CD4-positive, alpha-beta T cell (primary cell): ENCODE measurements at regions of chr6 and their contacts with region 1.

Region 1: DNA sequence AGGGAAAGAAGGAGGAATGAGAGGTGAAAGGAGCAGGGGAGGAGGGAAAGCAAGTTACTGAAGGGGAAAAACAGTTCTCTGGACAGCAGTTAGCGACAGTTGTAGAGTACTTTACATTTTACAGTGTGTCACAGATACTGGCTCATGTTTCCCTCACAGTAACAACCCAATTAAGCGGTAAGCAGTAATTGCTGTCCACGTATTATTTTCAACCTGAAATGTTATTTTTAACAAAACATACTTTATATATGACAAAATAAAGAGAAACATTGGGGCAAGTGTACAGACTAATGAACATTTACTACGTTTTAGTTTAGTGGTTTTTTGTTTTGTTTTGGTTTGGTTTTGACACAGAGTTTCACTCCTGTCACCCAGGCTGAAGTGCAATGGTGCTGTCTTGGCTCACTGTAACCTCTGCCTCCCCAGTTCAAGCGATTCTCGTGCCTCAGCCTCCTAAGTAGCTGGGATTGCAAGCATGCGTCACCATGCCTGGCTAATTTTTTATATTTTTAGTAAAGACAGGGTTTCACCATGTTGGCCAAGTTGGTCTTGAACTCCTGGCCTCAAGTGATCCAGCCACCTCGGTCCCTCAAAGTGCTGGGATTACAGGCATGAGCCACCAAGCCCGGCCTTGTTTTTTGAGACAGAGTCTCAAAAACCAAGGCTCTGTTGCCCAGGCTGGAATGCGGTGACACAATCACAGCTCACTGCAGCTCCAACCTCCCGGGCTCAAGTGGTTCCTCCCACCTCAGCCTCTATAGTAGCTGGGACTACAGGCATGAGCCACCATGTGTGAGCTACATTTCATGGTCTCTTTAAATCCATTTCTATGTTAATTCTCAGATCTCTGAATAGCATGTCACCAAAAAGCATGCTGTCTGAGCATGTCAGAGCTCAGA is 22.6 kb upstream of the BTN3A2 start:
- DNase-seq: no peak
- ATAC-seq: peak; percentile 14
- H3K4me3 ChIP-seq: peak overlapping the region; percentile 42
- H3K4me3 Mint-ChIP-seq: peak overlapping the region; percentile 71
- H3K27ac ChIP-seq: no peak overlapping the region
- H3K27ac Mint-ChIP-seq: no peak overlapping the region
- H3K4me1 ChIP-seq: peaks cover 12% of the 10 kb centered on the region
- H3K4me1 Mint-ChIP-seq: peaks cover 7% of the 10 kb centered on the region
- H3K27me3 ChIP-seq: no peaks in the 10 kb centered on the region
- H3K27me3 Mint-ChIP-seq: no peaks in the 10 kb centered on the region
- CTCF ChIP-seq: no peak

Region 2: GRCh38 chr6:25583099-25583498 is 759.3 kb before region 1 on chr6:
- CTCF ChIA-PET with region 1: no interaction called
- POLR2A ChIA-PET with region 1: no interaction called
- intact Hi-C with region 1: no loop called
- DNase-seq: no peak
- ATAC-seq: no peak
- H3K4me3 ChIP-seq: no peak overlapping the region
- H3K4me3 Mint-ChIP-seq: no peak overlapping the region
- H3K27ac ChIP-seq: no peak overlapping the region
- H3K27ac Mint-ChIP-seq: no peak overlapping the region
- H3K4me1 ChIP-seq: peaks cover 5% of the 10 kb centered on the region
- H3K4me1 Mint-ChIP-seq: peaks cover 10% of the 10 kb centered on the region
- H3K27me3 ChIP-seq: no peaks in the 10 kb centered on the region
- H3K27me3 Mint-ChIP-seq: no peaks in the 10 kb centered on the region
- CTCF ChIP-seq: no peak

Region 3: DNA sequence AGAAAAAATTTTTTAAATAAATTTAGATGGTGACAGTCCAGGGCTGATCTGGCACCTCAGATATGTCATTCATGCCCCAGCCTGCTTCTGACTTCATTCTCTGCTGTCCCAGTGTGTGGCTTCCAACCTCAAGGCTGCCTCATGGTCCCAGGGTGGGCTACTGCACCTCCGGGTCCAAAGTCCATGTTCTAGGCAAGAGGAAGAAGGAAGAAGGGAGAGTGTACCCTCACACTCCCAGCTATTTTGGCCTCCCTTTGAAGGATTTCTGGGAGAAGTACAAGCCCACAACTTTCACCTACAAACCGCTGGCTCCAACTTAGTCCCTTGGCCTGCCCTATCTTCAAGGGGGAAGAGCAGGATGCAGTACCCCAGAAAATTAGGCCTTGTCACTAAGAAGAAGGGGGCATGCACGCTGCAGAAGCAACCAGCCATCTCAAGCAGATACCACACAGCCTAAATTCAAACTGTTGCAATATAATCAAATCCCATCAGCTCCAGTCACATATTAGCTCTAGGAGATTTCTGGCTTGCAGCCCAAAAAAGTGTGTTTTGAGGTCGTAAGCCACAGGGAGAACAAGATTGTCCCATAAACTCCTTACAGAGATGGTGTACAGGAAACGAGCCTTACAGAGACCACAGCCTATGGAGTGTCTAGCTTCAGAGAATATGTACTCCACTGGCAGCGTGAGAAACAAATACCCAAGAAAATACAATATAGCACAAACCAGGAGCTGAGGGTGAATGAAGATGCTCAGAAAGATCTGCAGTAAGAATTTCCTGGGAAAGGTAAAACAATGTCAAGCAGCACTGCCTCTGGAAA is 21.7 kb after region 1 on chr6:
- CTCF ChIA-PET with region 1: interaction called, 9 read pairs
- POLR2A ChIA-PET with region 1: interaction called, 11 read pairs
- intact Hi-C with region 1: no loop called
- DNase-seq: peak in 5 of 14 experiments; percentile 4 to 64 (median 47)
- ATAC-seq: peak; percentile 21
- H3K4me3 ChIP-seq: peak overlapping the region; percentile 91
- H3K4me3 Mint-ChIP-seq: no peak overlapping the region
- H3K27ac ChIP-seq: peak overlapping the region; percentile 93 to 94
- H3K27ac Mint-ChIP-seq: no peak overlapping the region
- H3K4me1 ChIP-seq: peaks cover 40% of the 10 kb centered on the region
- H3K4me1 Mint-ChIP-seq: peaks cover 53% of the 10 kb centered on the region
- H3K27me3 ChIP-seq: no peaks in the 10 kb centered on the region
- H3K27me3 Mint-ChIP-seq: no peaks in the 10 kb centered on the region
- CTCF ChIP-seq: no peak

Region 4: GRCh38 chr6:26493258-26493657 is 150.9 kb after region 1 on chr6:
- CTCF ChIA-PET with region 1: interaction called, 3 read pairs
- POLR2A ChIA-PET with region 1: no interaction called
- intact Hi-C with region 1: loop called in 1 of 2 experiments (anchors 5 kb)
- DNase-seq: peak in 3 of 14 experiments; percentile 27 to 38 (median 37)
- ATAC-seq: peak; percentile 59
- H3K4me3 ChIP-seq: no peak overlapping the region
- H3K4me3 Mint-ChIP-seq: no peak overlapping the region
- H3K27ac ChIP-seq: no peak overlapping the region
- H3K27ac Mint-ChIP-seq: no peak overlapping the region
- H3K4me1 ChIP-seq: no peaks in the 10 kb centered on the region
- H3K4me1 Mint-ChIP-seq: no peaks in the 10 kb centered on the region
- H3K27me3 ChIP-seq: no peaks in the 10 kb centered on the region
- H3K27me3 Mint-ChIP-seq: no peaks in the 10 kb centered on the region
- CTCF ChIP-seq: no peak

Region 5: DNA sequence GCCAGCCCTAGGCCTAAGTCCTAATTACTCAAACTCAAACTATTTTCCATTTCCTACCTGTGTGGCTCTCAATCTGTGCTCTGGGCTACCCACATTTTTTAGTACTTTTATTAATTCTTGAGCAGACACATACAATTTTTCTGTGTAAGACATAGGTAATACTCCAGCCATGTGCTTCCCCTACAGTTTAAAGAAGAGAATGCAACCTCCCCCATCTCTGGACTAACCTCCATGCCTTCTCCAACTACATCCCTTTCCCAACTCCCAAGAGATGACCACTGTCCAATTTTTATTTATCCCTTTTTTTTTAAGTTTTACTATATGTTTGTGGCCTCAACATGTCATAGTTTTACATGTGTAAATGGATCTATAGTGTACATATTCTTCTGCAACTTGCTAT is 201.6 kb after region 1 on chr6:
- CTCF ChIA-PET with region 1: interaction called, 10 read pairs
- POLR2A ChIA-PET with region 1: no interaction called
- intact Hi-C with region 1: loop called in 1 of 2 experiments (anchors 2 kb)
- DNase-seq: peak in 3 of 14 experiments; percentile 35 to 46 (median 44)
- ATAC-seq: peak; percentile 79
- H3K4me3 ChIP-seq: no peak overlapping the region
- H3K4me3 Mint-ChIP-seq: peak overlapping the region; percentile 42
- H3K27ac ChIP-seq: no peak overlapping the region
- H3K27ac Mint-ChIP-seq: peak overlapping the region; percentile 35
- H3K4me1 ChIP-seq: peaks cover 24% of the 10 kb centered on the region
- H3K4me1 Mint-ChIP-seq: peaks cover 33% of the 10 kb centered on the region
- H3K27me3 ChIP-seq: no peaks in the 10 kb centered on the region
- H3K27me3 Mint-ChIP-seq: no peaks in the 10 kb centered on the region
- CTCF ChIP-seq: peak; percentile 25

Region 6: GRCh38 chr6:26596579-26597388 is 254.4 kb after region 1 on chr6 and contains the start of gene ABT1:
- CTCF ChIA-PET with region 1: interaction called, 41 read pairs
- POLR2A ChIA-PET with region 1: interaction called, 11 read pairs
- intact Hi-C with region 1: loop called (anchors 1 kb)
- DNase-seq: peak; percentile 92 to 98 (median 96)
- ATAC-seq: peak; percentile 79
- H3K4me3 ChIP-seq: peak within 1 kb of the TSS; percentile 98
- H3K4me3 Mint-ChIP-seq: no peak within 1 kb of the TSS
- H3K27ac ChIP-seq: peak within 1 kb of the TSS; percentile 86 to 95
- H3K27ac Mint-ChIP-seq: no peak within 1 kb of the TSS
- H3K4me1 ChIP-seq: peaks cover 31% of the 10 kb centered on the region
- H3K4me1 Mint-ChIP-seq: peaks cover 23% of the 10 kb centered on the region
- H3K27me3 ChIP-seq: peaks cover 8 to 28% of the 10 kb centered on the region in 2 experiments
- H3K27me3 Mint-ChIP-seq: peaks cover 30% of the 10 kb centered on the region
- CTCF ChIP-seq: no peak
- total RNA-seq, gene ABT1: 39.8 to 40.4 TPM